A549 (cell line): ENCODE measurements at regions of chr17 and their contacts with region 1.

Region 1: DNA sequence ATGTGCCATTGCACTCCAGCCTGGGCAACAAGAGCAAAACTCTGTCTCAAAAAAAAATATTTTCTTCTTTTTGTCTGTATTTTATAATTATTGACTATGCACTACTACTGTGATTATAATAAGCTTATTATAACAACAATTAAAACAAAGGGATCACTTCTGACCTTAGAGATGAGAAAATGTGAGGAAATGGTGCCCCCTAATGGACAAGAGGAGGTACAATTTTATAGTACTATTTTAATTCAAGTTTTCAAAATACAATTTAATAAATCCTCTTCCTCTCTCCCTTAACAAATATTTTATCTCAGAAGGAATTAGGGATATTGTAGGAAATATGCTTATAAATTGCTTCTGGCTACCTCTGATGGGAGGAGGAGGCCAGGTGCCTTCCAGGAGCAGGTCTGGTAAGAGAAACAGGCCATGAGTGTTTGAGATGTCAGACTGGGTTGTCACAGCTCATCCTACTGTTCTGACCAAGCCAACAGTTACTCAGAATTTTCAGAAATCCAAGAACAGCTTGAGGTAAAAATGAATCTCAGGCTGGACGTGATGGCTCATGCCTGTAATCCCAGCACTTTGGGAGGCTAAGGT is 14.0 kb downstream of the VPS53 start:
- DNase-seq: peak; percentile 35 to 73
- ATAC-seq: peak in 1 of 2 experiments; percentile 71; a peak in 2 of 6 replicates
- H3K4me3 ChIP-seq: no peak overlapping the region
- H3K27ac ChIP-seq: peak overlapping the region in 1 of 2 experiments; percentile 16; a peak in 1 of 6 replicates
- H3K4me1 ChIP-seq: peaks cover 8% of the 10 kb centered on the region
- CTCF ChIP-seq: peak; percentile 94
- EP300 ChIP-seq: no peak
- POLR2A ChIP-seq: no peak
- RAD21 ChIP-seq: peak; percentile 91 to 95

Region 2: GRCh38 chr17:385926-386876 is 314.4 kb before region 1 on chr17:
- CTCF ChIA-PET with region 1: interaction called, 19 read pairs
- POLR2A ChIA-PET with region 1: no interaction called
- DNase-seq: peak; percentile 76 to 96
- ATAC-seq: peak; percentile 85
- H3K4me3 ChIP-seq: peak overlapping the region; percentile 69
- H3K27ac ChIP-seq: peak overlapping the region; percentile 96 to 99
- H3K4me1 ChIP-seq: peaks cover 41% of the 10 kb centered on the region
- CTCF ChIP-seq: peak; percentile 93
- EP300 ChIP-seq: no peak
- POLR2A ChIP-seq: no peak
- RAD21 ChIP-seq: peak; percentile 82 to 99

Region 3: DNA sequence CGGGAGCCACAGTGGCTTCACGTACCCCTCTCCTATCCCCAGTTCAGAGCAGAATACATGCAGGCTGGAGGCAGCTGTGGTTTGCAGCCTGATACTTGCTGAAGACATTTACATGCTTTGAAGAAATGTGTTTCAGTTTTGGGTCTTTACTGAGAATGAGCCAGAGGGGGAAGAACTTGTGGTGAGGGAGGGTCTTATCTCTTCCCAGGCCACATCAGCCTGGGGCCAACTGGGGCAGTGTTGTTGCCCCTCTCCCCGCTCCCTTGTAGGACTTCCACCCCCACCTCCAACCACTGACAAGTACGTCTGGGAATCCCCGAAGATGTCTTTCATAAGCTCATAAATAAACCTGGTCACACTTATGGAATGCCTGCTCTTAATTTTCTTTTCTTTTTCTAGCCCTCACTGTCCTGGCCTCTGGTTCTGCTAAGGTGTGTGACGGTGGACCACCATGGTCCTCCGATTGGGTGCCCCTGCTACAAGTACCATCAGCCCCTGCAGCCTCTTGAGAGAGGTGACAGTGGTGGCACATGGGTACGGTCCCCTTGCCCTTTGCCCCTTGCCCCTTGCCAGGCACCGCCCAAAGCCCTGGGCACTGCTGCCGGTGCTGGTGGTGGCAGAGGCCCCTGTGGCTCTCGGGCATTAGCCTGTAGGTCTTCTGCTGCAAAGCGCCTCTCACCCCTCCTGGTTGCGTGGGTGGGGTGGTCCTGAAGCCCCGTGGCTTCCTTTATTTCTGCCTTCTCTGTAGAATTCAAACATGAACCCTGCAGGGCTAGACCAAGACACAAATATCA is 203.2 kb before region 1 on chr17:
- CTCF ChIA-PET with region 1: interaction called, 17 read pairs
- POLR2A ChIA-PET with region 1: no interaction called
- DNase-seq: no peak
- ATAC-seq: peak in 1 of 2 experiments; percentile 21; a peak in 2 of 6 replicates
- H3K4me3 ChIP-seq: no peak overlapping the region
- H3K27ac ChIP-seq: no peak overlapping the region
- H3K4me1 ChIP-seq: peaks cover 8% of the 10 kb centered on the region; the same call in 2 of the 3 replicates
- CTCF ChIP-seq: no peak
- EP300 ChIP-seq: no peak
- POLR2A ChIP-seq: no peak
- RAD21 ChIP-seq: no peak

Region 4: DNA sequence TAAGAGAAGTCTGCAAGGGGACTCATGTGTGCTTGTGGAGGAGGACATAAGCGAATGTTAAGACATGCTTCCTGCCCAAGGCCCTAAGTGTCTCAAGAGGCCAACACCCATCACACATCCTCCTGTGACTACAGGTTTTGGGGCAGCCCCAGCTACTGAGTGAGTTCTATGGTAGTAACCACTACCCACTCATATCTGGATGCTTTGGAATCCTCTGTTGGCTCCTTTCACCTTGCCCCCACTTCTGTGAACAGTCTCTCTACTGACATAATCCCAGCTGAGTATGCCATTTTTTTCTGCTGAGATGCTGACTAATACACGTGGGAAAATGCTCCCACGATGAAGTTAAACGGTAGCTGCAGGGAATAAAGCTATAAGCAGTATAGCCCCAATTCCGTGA is 139.5 kb before region 1 on chr17:
- CTCF ChIA-PET with region 1: interaction called, 18 read pairs
- POLR2A ChIA-PET with region 1: no interaction called
- DNase-seq: no peak
- ATAC-seq: no peak
- H3K4me3 ChIP-seq: no peak overlapping the region
- H3K27ac ChIP-seq: peak overlapping the region in 1 of 2 experiments; percentile 71; a peak in 2 of 6 replicates
- H3K4me1 ChIP-seq: peaks cover 30% of the 10 kb centered on the region
- CTCF ChIP-seq: no peak
- EP300 ChIP-seq: no peak
- POLR2A ChIP-seq: no peak
- RAD21 ChIP-seq: no peak

Region 5: GRCh38 chr17:688100-688989 is 12.3 kb before region 1 on chr17:
- CTCF ChIA-PET with region 1: interaction called, 86 read pairs
- POLR2A ChIA-PET with region 1: no interaction called
- DNase-seq: peak in 1 of 2 experiments; percentile 67
- ATAC-seq: peak in 1 of 2 experiments; percentile 34; a peak in 2 of 6 replicates
- H3K4me3 ChIP-seq: no peak overlapping the region
- H3K27ac ChIP-seq: no peak overlapping the region
- H3K4me1 ChIP-seq: peaks cover 38% of the 10 kb centered on the region
- CTCF ChIP-seq: peak; percentile 21; the same call in 2 of the 3 replicates
- EP300 ChIP-seq: no peak
- POLR2A ChIP-seq: no peak
- RAD21 ChIP-seq: peak in 1 of 2 experiments; percentile 41; a peak in 3 of 5 replicates

Region 6: DNA sequence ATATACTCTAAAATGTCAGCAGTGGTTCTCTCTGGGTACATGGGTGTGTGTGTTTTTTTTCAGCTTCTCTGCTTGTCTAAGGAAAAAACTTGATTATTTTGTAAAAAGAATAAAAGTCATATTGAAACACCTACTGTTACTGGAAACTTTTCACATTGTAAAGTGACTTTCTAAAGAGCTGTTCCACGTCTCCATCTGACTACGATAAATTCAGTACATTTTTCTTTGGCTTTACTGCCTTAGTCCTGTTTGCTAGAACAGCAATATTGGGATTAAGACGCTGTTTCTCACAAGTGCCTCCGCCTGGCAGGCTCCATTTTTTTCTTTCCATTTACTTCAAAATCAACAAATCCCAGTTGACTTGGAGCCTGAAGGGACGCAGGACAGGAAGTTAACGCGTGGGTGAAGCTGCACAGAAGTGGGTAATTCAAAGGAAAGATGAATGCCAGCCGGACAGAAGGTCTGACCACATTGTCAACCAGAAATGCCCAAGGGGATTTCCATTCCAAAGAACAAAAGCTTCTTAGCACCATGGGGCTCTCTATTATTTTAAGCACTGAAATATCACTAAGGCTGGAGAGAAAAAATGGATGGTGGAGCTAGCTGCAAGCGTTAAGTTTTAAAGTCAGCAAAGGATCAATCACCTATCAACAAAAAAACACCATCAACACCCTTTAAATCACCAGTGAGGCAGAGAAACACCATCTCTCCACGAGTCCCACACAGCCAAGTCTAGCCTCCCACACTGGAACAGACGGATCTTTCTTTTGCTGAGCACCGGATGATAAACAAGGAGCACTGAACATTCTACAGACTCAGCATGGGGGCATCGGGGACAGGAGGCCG is 73.1 kb after region 1 on chr17:
- CTCF ChIA-PET with region 1: no interaction called
- POLR2A ChIA-PET with region 1: no interaction called
- DNase-seq: no peak
- ATAC-seq: no peak
- H3K4me3 ChIP-seq: no peak overlapping the region
- H3K27ac ChIP-seq: no peak overlapping the region
- H3K4me1 ChIP-seq: no peaks in the 10 kb centered on the region
- CTCF ChIP-seq: no peak
- EP300 ChIP-seq: no peak
- POLR2A ChIP-seq: no peak
- RAD21 ChIP-seq: no peak

Region 7: DNA sequence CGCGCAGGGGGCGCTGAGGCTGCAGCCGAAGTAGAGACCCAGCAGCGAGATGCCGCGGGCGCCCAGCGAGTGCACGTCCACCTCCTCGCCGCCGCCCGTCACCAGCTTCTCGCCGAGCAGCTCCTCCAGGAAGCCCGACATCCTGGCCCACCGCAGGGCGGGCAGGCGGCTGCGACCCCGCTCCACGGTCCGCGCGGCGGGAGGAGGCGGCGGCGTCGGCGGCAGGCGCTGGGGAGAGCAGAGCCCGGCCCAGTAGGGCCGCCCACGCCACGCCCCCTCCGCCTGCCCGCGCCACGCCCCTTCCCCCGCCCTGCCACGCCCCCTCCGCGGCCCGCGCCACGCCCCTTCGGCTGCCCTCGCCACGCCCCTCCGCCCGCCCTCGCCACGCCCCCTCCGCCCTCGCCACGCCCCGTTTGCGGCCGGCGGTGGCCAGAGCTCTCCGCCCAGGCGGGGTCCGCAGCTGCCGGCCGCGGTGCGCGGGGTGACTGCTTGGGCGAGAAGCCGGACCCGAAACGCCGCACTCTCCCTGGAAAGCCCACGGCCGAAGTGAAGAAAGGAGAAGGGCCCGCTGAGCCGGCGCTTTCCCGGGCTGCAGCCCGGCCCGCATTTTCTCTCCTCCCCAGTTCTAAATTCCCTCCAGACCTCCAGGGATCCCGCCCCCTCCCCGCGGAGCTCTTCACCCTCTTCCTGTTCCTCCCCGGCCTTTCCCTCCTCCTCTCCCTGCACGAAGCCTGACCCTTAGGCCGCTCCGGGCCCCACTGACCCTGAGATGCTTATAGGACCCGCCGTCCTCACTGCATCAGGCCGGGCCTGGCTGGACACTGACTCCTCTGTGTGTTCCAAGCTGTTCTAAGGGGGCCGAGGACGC is 279.2 kb after region 1 on chr17 and contains the start of gene NXN:
- CTCF ChIA-PET with region 1: interaction called, 23 read pairs
- POLR2A ChIA-PET with region 1: no interaction called
- DNase-seq: peak; percentile 65 to 82
- ATAC-seq: peak; percentile 76 to 85
- H3K4me3 ChIP-seq: peak within 1 kb of the TSS; percentile 89
- H3K27ac ChIP-seq: peak within 1 kb of the TSS; percentile 76 to 91
- H3K4me1 ChIP-seq: peaks cover 16% of the 10 kb centered on the region; the same call in 2 of the 3 replicates
- CTCF ChIP-seq: peak; percentile 48
- EP300 ChIP-seq: no peak
- POLR2A ChIP-seq: peak; percentile 72
- RAD21 ChIP-seq: peak; percentile 19 to 56; a peak in 3 of 5 replicates
- polyA plus RNA-seq, gene NXN: 22.2 and 24.6 TPM in 2 replicates